Naive thymus-derived CD4-positive, alpha-beta T cell (primary cell): ENCODE measurements at regions of chr10 and their contacts with region 1.

Region 1: DNA sequence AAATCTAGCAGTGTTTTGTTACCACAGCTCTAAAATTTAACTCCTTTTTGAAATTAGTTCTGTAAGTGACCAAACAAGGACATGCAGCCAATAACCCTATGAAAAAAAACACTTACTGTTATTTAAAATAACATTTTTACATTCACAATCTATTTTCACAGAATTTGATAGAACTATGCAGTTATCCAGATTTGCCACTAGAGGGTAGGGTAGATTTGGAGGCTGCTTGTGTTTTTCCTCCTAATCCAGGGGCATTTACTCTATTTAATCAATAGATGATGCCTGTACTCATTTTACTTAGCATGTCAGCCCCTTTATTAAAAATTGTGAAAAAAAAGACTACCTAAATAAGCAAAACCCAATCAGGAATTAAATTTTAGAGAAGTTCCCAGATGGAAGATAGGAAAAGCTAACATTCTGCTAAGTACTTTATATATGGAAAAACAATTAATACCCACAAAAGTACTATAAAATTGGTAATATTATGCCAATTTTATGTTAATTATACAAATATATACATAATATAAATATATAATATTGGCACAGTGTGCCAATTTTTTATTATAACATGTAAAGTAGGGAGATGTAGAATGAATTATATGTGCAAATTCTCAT is 18.1 kb upstream of the LIPK start:
- DNase-seq: peak in 5 of 9 donors; percentile 7 to 38 (median 18)
- ATAC-seq: peak; percentile 70
- H3K4me3 ChIP-seq: no peak overlapping the region
- H3K4me3 Mint-ChIP-seq: no peak overlapping the region
- H3K27ac ChIP-seq: no peak overlapping the region
- H3K27ac Mint-ChIP-seq: no peak overlapping the region
- H3K4me1 ChIP-seq: no peaks in the 10 kb centered on the region
- H3K4me1 Mint-ChIP-seq: no peaks in the 10 kb centered on the region
- H3K27me3 ChIP-seq: no peaks in the 10 kb centered on the region
- H3K27me3 Mint-ChIP-seq: peaks cover 7 to 30% (median 7%) of the 10 kb centered on the region in 5 donors

Region 2: GRCh38 chr10:88428442-88428841 is 259.5 kb before region 1 on chr10:
- CTCF ChIA-PET with region 1: no interaction called
- POLR2A ChIA-PET with region 1: no interaction called
- intact Hi-C with region 1: no loop called
- DNase-seq: no peak
- ATAC-seq: no peak
- H3K4me3 ChIP-seq: no peak overlapping the region
- H3K4me3 Mint-ChIP-seq: no peak overlapping the region
- H3K27ac ChIP-seq: no peak overlapping the region
- H3K27ac Mint-ChIP-seq: no peak overlapping the region
- H3K4me1 ChIP-seq: peaks cover 0 to 4% of the 10 kb centered on the region in 2 donors
- H3K4me1 Mint-ChIP-seq: peaks cover 0 to 8% (median 6%) of the 10 kb centered on the region in 7 donors
- H3K27me3 ChIP-seq: no peaks in the 10 kb centered on the region
- H3K27me3 Mint-ChIP-seq: peaks cover 0 to 46% (median 0%) of the 10 kb centered on the region in 5 donors

Region 3: GRCh38 chr10:88565072-88565471 is 122.9 kb before region 1 on chr10:
- CTCF ChIA-PET with region 1: no interaction called
- POLR2A ChIA-PET with region 1: no interaction called
- intact Hi-C with region 1: loop called in 1 of 2 experiments (anchors 1 kb)
- DNase-seq: peak in 4 of 9 donors; percentile 5 to 29 (median 12)
- ATAC-seq: peak; percentile 54
- H3K4me3 ChIP-seq: no peak overlapping the region
- H3K4me3 Mint-ChIP-seq: no peak overlapping the region
- H3K27ac ChIP-seq: no peak overlapping the region
- H3K27ac Mint-ChIP-seq: no peak overlapping the region
- H3K4me1 ChIP-seq: no peaks in the 10 kb centered on the region
- H3K4me1 Mint-ChIP-seq: peaks cover 0 to 4% (median under 1%) of the 10 kb centered on the region in 7 donors
- H3K27me3 ChIP-seq: no peaks in the 10 kb centered on the region
- H3K27me3 Mint-ChIP-seq: peaks cover 0 to 23% (median 0%) of the 10 kb centered on the region in 5 donors